Left ventricle myocardium inferior (tissue), 1 donor: ENCODE measurements at regions of chr9 and their contacts with region 1.

Region 1: GRCh38 chr9:113807173-113808061 is 68.7 kb upstream of the ZNF618 start:
- DNase-seq: peak; percentile 22
- H3K4me3 ChIP-seq: peak overlapping the region; percentile 24
- H3K27ac ChIP-seq: no peak overlapping the region
- H3K4me1 ChIP-seq: peaks cover 11% of the 10 kb centered on the region
- H3K27me3 ChIP-seq: peaks cover 21% of the 10 kb centered on the region
- CTCF ChIP-seq: peak; percentile 92

Region 2: GRCh38 chr9:114033397-114034103 is 226.1 kb after region 1 on chr9:
- intact Hi-C with region 1: loop called (anchors 5 kb)
- DNase-seq: no peak
- H3K4me3 ChIP-seq: no peak overlapping the region
- H3K27ac ChIP-seq: no peak overlapping the region
- H3K4me1 ChIP-seq: peaks cover 3% of the 10 kb centered on the region
- H3K27me3 ChIP-seq: peaks cover 4% of the 10 kb centered on the region
- CTCF ChIP-seq: peak; percentile 77